ENCODE measurements at regions of chr5 and their contacts with region 1.

Region 1: DNA sequence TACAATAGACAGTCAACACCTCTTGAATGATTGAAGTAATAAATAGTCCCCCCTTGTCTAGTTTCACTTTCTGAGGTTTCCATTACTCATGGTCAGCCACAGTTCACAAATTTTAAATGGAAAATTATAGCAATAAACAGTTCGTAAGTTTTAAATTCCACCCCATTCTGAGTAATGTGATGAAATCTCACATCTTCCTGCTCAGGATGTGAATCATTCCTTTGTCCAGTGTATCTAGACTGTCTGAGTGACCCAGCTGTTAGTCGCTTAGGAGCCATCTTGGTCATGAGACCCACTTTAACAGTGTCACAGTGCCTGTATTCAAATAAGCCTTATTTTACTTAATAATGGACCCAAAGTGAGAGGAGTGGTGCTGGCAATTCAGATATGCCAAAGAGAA is 311.6 kb upstream of the PRR16 start:
- DNase-seq: no peak
- ATAC-seq: peak in 1 of 2 donors; percentile 81

Region 2: GRCh38 chr5:119411935-119412602 is 740.4 kb before region 1 on chr5:
- intact Hi-C with region 1: no loop called
- DNase-seq: peak; percentile 35
- ATAC-seq: peak; percentile 92 to 95

Region 3: DNA sequence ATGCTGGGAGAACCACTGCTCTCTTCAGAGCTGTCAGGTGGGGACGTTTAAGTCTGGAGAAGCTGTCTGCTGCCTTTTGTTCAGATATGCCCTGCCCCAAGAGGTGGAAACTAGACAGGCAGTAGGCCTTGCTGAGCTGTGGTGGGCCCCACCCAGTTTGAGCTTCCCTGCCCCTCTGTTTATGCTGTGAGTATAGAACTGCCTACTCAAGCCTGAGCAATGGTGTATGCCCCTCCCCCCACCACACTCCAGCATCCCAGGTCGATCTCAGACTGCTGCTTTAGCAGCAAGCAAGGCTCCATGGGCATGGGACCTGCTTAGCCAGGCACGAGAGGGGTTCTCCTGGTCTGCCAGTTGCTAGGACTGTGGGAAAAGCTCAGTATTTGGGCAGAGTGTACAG is 160.8 kb before region 1 on chr5:
- intact Hi-C with region 1: no loop called
- DNase-seq: no peak
- ATAC-seq: no peak

Region 4: GRCh38 chr5:120446068-120446492 is 293.6 kb after region 1 on chr5:
- intact Hi-C with region 1: loop called in 1 of 2 experiments (anchors 10 kb)
- DNase-seq: no peak
- ATAC-seq: peak in 1 of 2 donors; percentile 71